Left cardiac atrium (tissue), 4 donors: ENCODE measurements at regions of chr1 and their contacts with region 1.

Region 1: GRCh38 chr1:35451125-35451528 is 106.1 kb downstream of the KIAA0319L start:
- DNase-seq: peak; percentile 83
- ATAC-seq: peak; percentile 85 to 88

Region 2: DNA sequence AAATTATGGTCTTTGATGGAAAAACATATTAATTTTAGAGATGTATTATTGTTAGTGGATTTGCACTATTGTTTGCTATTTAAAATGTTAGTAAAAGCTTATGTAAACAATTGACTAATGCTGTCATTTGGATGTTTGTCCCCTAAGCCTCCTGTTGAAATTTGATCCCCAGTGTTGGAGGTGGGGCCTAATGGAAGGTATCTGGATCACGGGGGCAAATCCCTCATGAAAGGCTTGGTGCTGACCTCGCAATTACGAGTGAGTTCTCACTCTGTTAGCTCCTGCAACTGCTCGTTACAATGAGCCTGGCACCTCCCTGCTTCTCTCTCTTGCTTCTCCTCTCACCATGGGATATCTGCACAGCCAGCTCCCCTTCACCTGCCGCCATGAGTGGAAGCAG is 480.3 kb before region 1 on chr1:
- intact Hi-C with region 1: no loop called
- DNase-seq: no peak
- ATAC-seq: no peak

Region 3: GRCh38 chr1:35112668-35113067 is 338.5 kb before region 1 on chr1:
- intact Hi-C with region 1: no loop called
- DNase-seq: no peak
- ATAC-seq: no peak

Region 4: DNA sequence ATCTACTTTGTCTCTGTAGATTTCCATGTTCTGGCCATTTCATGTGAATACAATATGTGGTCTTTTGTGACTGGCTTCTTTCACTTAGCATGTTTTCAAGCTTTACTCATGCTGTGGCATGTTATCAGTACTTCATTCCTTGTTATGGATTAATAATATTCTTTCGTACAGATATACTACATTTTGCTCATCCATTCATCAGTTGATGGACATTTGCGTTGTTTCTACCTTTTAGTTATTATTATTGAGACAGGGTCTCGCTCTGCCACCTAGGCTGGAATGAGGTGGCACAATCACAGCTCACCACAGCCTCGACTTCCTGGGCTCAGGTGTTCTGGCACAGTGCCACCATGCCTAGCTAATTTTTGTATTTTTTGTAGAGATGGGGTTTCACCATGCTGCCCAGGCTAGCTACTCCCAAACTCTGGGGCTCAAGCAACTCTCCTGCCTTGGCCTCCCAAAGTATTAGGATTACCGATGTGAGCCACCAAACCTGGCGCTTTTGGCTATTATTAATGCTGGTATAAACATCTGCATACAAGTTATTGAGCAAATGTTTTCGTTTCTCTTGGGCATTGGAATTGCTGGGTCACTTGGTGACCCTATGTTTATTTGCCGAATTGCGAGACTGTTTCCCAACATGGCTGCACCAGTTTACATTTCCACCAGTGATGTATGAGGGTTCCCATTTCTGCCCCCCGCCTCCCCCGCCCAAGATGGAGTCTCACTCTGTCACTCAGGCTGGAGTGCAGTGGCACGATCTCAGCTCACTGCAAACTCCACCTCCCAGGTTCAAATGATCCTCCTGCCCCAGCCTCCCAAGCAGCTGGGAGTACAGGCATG is 279.3 kb before region 1 on chr1:
- intact Hi-C with region 1: no loop called
- DNase-seq: no peak
- ATAC-seq: no peak

Region 5: GRCh38 chr1:35726450-35727433 is 275.6 kb after region 1 on chr1:
- intact Hi-C with region 1: loop called in 1 of 2 experiments (anchors 5 kb)
- DNase-seq: peak; percentile 61
- ATAC-seq: peak; percentile 89 to 91

Region 6: DNA sequence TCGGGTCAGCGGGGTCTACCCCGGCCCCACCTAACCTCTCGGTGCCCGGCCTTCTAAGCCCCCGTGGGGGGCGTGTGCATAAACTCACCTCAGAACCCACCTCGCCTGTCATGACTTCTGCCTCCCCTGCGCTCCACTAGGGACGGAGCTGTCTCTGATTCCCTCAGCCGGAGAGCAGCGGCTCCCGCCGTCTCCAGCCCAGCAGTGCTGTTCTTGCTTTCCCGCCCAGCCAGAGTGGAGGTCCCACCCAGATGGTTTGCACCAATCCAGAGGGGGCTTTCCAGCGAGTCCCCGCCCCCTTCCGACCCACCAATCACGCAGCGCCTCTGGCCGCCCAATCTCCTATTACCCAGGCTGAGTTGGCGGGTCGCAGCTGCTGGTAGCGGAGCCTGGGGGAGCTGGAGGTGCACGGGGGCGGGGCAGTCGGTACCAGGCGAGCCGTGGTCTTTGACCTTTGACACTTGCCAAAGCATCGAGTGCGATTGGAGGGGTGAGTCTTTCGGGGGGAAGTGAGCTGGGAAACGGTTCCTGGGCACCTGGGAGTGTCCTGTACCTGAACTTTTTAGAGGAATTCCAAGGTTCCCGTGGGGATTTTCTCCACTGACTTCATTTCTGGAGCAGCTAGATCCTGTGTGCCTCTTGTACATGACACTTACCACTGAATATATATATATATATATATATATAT is 318.8 kb after region 1 on chr1 and contains the start of gene CLSPN:
- intact Hi-C with region 1: loop called in 1 of 2 experiments (anchors 10 kb)
- DNase-seq: peak; percentile 96
- ATAC-seq: peak; percentile 99 to 100
- total RNA-seq, gene CLSPN: 1.5 to 1.9 TPM